Activated CD8-positive, alpha-beta T cell treated with anti-CD3 and anti-CD28 coated beads, Interleukin-2, amount 10 ng/mL, durations not matched to agents 7 days and 5 days (primary cell): ENCODE measurements at regions of chr2 and their contacts with region 1.

Region 1: GRCh38 chr2:9753276-9753600 is 90.0 kb upstream of the TAF1B start:
- DNase-seq: peak; percentile 49
- ATAC-seq: peak; percentile 52
- H3K4me3 Mint-ChIP-seq: peak overlapping the region; percentile 70
- H3K27ac Mint-ChIP-seq: peak overlapping the region; percentile 91
- H3K4me1 Mint-ChIP-seq: peaks cover 61% of the 10 kb centered on the region
- H3K27me3 Mint-ChIP-seq: peaks cover 44% of the 10 kb centered on the region

Region 2: GRCh38 chr2:9770308-9771100 is 17.3 kb after region 1 on chr2:
- CTCF ChIA-PET with region 1: interaction called, 44 read pairs
- POLR2A ChIA-PET with region 1: interaction called, 3 read pairs
- DNase-seq: peak; percentile 69
- ATAC-seq: peak; percentile 69
- H3K4me3 Mint-ChIP-seq: no peak overlapping the region
- H3K27ac Mint-ChIP-seq: peak overlapping the region; percentile 60
- H3K4me1 Mint-ChIP-seq: peaks cover 9% of the 10 kb centered on the region
- H3K27me3 Mint-ChIP-seq: peaks cover 8% of the 10 kb centered on the region